ENCODE measurements at regions of chr22 and their contacts with region 1.

Region 1: DNA sequence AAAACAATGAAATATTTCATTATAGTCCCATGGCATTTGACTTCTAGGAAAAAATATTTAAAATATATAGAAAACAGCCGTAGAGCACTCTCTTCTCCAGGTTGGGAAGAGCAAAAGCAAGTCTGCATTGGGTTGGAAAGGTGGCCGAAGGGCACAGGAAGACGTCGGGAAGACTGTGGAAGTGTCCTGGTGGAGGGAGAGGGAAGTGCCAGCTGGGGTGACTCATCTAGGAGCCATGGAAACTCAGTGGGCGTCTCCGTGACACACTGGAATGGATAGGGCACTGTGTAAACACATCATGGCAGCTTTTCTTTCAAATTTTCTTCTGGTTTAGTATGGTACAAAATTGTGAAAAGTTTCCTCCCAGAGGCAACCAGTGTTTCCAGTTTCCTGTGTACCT is 12.7 kb downstream of the GTPBP1 start:
- DNase-seq: peak; percentile 45
- H3K4me3 ChIP-seq: no peak overlapping the region
- H3K27ac ChIP-seq: peak overlapping the region in 1 of 2 experiments; percentile 64; a peak in 2 of 4 replicates
- H3K4me1 ChIP-seq: no peaks in the 10 kb centered on the region; a peak in 1 of 4 replicates
- H3K27me3 ChIP-seq: no peaks in the 10 kb centered on the region
- CTCF ChIP-seq: peak; percentile 46
- EP300 ChIP-seq: no peak
- RAD21 ChIP-seq: no peak

Region 2: DNA sequence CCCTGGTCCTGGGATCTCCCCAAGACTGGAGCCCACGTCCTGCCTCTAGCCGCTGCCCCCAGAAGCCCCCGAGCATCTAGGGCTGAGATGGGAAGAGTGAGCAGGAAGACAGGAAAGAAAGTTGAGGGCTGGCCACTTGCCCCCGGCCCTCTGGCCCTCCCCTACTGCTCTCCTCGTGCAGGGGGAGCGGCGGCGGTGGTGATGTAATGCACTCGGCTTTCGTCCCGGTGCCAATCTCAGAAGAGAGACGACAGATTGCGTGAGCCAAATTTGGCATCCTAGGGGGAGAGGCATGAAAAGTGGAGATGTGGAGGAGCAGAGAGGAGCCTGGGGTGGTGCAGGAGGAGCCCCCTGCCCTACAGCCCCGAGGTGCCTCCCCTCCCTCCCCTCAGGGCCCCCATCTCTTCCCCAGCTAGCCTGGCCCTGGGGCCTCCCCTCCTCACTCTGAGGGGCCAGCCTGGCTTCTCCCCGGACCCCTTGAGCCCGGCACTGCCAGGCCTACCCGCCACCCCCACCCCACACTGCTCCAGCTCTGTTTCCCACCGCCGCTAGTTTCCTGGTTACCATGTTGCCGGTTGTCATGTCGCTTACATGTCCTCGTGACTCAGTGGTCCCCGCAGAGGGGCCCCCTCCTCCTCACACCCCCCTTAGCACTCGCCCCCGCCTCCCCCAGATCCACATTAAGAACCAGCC is 265.9 kb before region 1 on chr22:
- CTCF ChIA-PET with region 1: no interaction called
- POLR2A ChIA-PET with region 1: no interaction called
- DNase-seq: no peak
- H3K4me3 ChIP-seq: no peak overlapping the region
- H3K27ac ChIP-seq: no peak overlapping the region
- H3K4me1 ChIP-seq: peaks cover 0 to 8% of the 10 kb centered on the region in 2 experiments; a peak in 1 of 4 replicates
- H3K27me3 ChIP-seq: no peaks in the 10 kb centered on the region; the same call in 1 of the 2 replicates
- CTCF ChIP-seq: no peak
- EP300 ChIP-seq: no peak
- RAD21 ChIP-seq: no peak

Region 3: GRCh38 chr22:38733329-38733723 is 14.9 kb after region 1 on chr22:
- CTCF ChIA-PET with region 1: interaction called, 15 read pairs
- POLR2A ChIA-PET with region 1: no interaction called
- DNase-seq: peak; percentile 74
- H3K4me3 ChIP-seq: peak overlapping the region in 1 of 2 experiments; percentile 48; a peak in 1 of 4 replicates
- H3K27ac ChIP-seq: no peak overlapping the region; a peak in 1 of 4 replicates
- H3K4me1 ChIP-seq: no peaks in the 10 kb centered on the region; a peak in 1 of 4 replicates
- H3K27me3 ChIP-seq: no peaks in the 10 kb centered on the region
- CTCF ChIP-seq: peak; percentile 58
- EP300 ChIP-seq: no peak
- RAD21 ChIP-seq: peak; percentile 40